ENCODE measurements at regions of chr3 and their contacts with region 1.

Region 1: GRCh38 chr3:122081543-122082247 is 26.5 kb downstream of the CD86 start:
- DNase-seq: no peak
- ATAC-seq: no peak
- H3K4me3 Mint-ChIP-seq: no peak overlapping the region
- H3K27ac Mint-ChIP-seq: no peak overlapping the region
- H3K4me1 Mint-ChIP-seq: peaks cover 91% of the 10 kb centered on the region
- H3K27me3 Mint-ChIP-seq: no peaks in the 10 kb centered on the region
- CTCF ChIP-seq: no peak

Region 2: DNA sequence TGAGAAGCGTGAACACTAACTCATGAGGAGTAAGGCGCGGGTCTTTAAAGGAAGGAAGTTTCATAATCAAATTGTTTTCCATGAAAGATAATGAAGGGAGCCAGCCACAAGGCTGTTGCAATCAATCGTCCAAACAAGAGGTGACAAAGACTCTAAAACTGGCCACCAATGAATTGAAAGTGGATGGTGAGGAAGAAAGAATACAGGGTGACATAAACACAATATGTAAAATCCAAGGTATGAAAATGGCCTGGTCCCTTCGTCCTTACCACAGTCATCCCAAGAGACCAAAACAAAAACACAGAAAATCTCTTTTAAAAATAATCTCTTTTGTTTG is 14.5 kb before region 1 on chr3:
- CTCF ChIA-PET with region 1: interaction called, 10 read pairs
- POLR2A ChIA-PET with region 1: interaction called, 19 read pairs
- intact Hi-C with region 1: loop called (anchors 1 kb)
- DNase-seq: no peak
- ATAC-seq: peak; percentile 35
- H3K4me3 Mint-ChIP-seq: peak overlapping the region; percentile 54
- H3K27ac Mint-ChIP-seq: peak overlapping the region; percentile 72
- H3K4me1 Mint-ChIP-seq: peaks cover 59% of the 10 kb centered on the region
- H3K27me3 Mint-ChIP-seq: no peaks in the 10 kb centered on the region
- CTCF ChIP-seq: no peak